PC-9 (cell line): ENCODE measurements at regions of chr2 and their contacts with region 1.

Region 1: GRCh38 chr2:44937688-44938240 is 3.7 kb upstream of the SIX3 start:
- DNase-seq: peak; percentile 86 to 91
- H3K4me3 ChIP-seq: peak overlapping the region; percentile 88
- H3K27ac ChIP-seq: peak overlapping the region; percentile 77
- H3K4me1 ChIP-seq: peaks cover 25% of the 10 kb centered on the region
- H3K27me3 ChIP-seq: no peaks in the 10 kb centered on the region
- CTCF ChIP-seq: no peak; the same call in 1 of the 2 replicates

Region 2: GRCh38 chr2:43448822-43449110 is 1489.0 kb before region 1 on chr2:
- CTCF ChIA-PET with region 1: interaction called, 10 read pairs
- POLR2A ChIA-PET with region 1: no interaction called
- intact Hi-C with region 1: no loop called
- DNase-seq: peak in 1 of 2 experiments; percentile 82
- H3K4me3 ChIP-seq: no peak overlapping the region
- H3K27ac ChIP-seq: peak overlapping the region; percentile 32; the same call in 1 of the 2 replicates
- H3K4me1 ChIP-seq: peaks cover 40% of the 10 kb centered on the region
- H3K27me3 ChIP-seq: no peaks in the 10 kb centered on the region
- CTCF ChIP-seq: no peak

Region 3: GRCh38 chr2:44926957-44927356 is 10.8 kb before region 1 on chr2:
- CTCF ChIA-PET with region 1: no interaction called
- POLR2A ChIA-PET with region 1: interaction called, 10 read pairs
- intact Hi-C with region 1: no loop called
- DNase-seq: no peak
- H3K4me3 ChIP-seq: no peak overlapping the region
- H3K27ac ChIP-seq: no peak overlapping the region
- H3K4me1 ChIP-seq: 0 out of 2 replicates have a peak, but pooled peaks cover 4% of the 10 kb centered on the region
- H3K27me3 ChIP-seq: no peaks in the 10 kb centered on the region
- CTCF ChIP-seq: no peak